Caco-2 (cell line): ENCODE measurements at regions of chr1 and their contacts with region 1.

Region 1: DNA sequence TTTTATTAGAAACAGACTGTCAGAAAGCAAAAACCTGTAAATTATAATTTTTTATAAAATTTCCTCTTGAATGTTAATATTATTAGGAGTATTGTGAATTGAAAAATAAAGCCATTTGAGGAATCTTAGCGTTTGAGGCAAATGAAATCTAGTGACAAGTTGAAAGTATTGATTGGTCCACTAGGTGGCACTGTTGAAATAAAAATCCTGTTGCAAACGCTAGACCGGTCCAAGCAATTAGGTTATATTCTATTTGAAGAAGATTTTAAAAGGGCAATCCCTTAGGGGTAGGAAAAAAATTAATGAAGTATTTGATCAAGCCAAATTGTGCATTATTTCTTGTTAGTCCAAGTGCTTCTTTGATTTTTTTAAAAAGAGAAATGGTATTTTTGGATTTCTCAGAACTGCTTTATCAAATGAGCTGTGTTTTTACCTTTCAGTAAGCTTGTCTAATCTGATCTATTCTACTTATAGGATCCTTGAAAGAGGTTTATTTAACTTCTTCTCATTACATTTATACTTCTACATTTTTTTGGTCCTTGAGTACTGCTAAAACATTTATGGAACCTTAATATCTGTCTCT is 57.7 kb downstream of the ATG4C start:
- DNase-seq: peak in 1 of 2 experiments; percentile 45
- H3K4me3 ChIP-seq: no peak overlapping the region
- H3K4me3 Mint-ChIP-seq: no peak overlapping the region
- H3K27ac Mint-ChIP-seq: no peak overlapping the region
- H3K4me1 ChIP-seq: no peaks in the 10 kb centered on the region
- H3K4me1 Mint-ChIP-seq: no peaks in the 10 kb centered on the region
- H3K27me3 ChIP-seq: no peaks in the 10 kb centered on the region
- H3K27me3 Mint-ChIP-seq: no peaks in the 10 kb centered on the region
- CTCF ChIP-seq: peak; percentile 38 to 43

Region 2: DNA sequence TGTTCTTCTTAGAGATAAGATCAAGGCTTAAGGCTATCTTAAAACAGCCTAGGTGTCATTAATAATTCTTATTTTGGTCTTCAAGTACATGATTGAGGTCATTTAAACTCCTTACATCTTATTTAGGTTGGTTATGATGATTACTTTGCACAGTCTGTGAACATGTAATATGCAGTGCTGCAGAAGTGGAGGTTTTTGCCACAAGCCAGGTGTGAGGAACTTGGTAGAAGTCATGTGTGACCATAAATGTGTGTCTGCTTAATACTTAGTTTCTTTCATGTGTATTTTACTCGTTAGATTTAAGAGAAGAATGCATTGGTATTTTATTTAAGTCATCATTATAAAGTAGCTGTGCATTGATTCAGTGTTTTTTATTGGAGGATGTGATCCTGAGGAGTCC is 47.6 kb before region 1 on chr1:
- CTCF ChIA-PET with region 1: no interaction called
- POLR2A ChIA-PET with region 1: no interaction called
- intact Hi-C with region 1: no loop called
- DNase-seq: no peak
- H3K4me3 ChIP-seq: no peak overlapping the region
- H3K4me3 Mint-ChIP-seq: no peak overlapping the region
- H3K27ac Mint-ChIP-seq: no peak overlapping the region
- H3K4me1 ChIP-seq: no peaks in the 10 kb centered on the region
- H3K4me1 Mint-ChIP-seq: no peaks in the 10 kb centered on the region
- H3K27me3 ChIP-seq: no peaks in the 10 kb centered on the region
- H3K27me3 Mint-ChIP-seq: no peaks in the 10 kb centered on the region
- CTCF ChIP-seq: no peak

Region 3: GRCh38 chr1:62906428-62906886 is 64.8 kb after region 1 on chr1:
- CTCF ChIA-PET with region 1: interaction called, 5 read pairs
- POLR2A ChIA-PET with region 1: no interaction called
- intact Hi-C with region 1: loop called (anchors 10 kb)
- DNase-seq: no peak
- H3K4me3 ChIP-seq: no peak overlapping the region
- H3K4me3 Mint-ChIP-seq: no peak overlapping the region
- H3K27ac Mint-ChIP-seq: no peak overlapping the region
- H3K4me1 ChIP-seq: no peaks in the 10 kb centered on the region
- H3K4me1 Mint-ChIP-seq: no peaks in the 10 kb centered on the region
- H3K27me3 ChIP-seq: no peaks in the 10 kb centered on the region
- H3K27me3 Mint-ChIP-seq: no peaks in the 10 kb centered on the region
- CTCF ChIP-seq: peak; percentile 17 to 38

Region 4: GRCh38 chr1:62917805-62918204 is 76.1 kb after region 1 on chr1:
- CTCF ChIA-PET with region 1: no interaction called
- POLR2A ChIA-PET with region 1: no interaction called
- intact Hi-C with region 1: no loop called
- DNase-seq: no peak
- H3K4me3 ChIP-seq: no peak overlapping the region
- H3K4me3 Mint-ChIP-seq: no peak overlapping the region
- H3K27ac Mint-ChIP-seq: no peak overlapping the region
- H3K4me1 ChIP-seq: no peaks in the 10 kb centered on the region
- H3K4me1 Mint-ChIP-seq: no peaks in the 10 kb centered on the region
- H3K27me3 ChIP-seq: no peaks in the 10 kb centered on the region
- H3K27me3 Mint-ChIP-seq: peaks cover 2% of the 10 kb centered on the region
- CTCF ChIP-seq: no peak

Region 5: DNA sequence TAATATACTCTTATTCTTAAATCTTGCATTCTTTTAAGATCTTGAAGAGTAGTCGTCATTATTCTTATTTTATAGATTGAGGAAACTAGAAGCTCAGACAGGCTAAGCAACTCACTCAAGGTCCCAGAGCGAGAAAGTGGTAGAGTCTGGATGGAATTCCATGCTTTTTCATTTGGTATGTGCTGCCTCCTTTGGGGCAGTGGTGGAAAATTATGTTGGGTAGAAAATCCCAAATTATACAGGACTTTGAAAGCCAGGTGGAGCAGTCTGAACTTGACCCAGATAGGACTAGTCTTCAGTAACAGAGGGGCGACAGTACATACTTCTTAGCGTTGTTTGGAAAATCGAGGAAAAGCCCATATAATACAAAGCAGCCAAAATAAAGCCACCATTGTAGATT is 147.8 kb after region 1 on chr1:
- CTCF ChIA-PET with region 1: interaction called, 3 read pairs
- POLR2A ChIA-PET with region 1: no interaction called
- intact Hi-C with region 1: loop called (anchors 1 kb)
- DNase-seq: peak in 1 of 2 experiments; percentile 2
- H3K4me3 ChIP-seq: no peak overlapping the region
- H3K4me3 Mint-ChIP-seq: no peak overlapping the region
- H3K27ac Mint-ChIP-seq: no peak overlapping the region
- H3K4me1 ChIP-seq: no peaks in the 10 kb centered on the region
- H3K4me1 Mint-ChIP-seq: no peaks in the 10 kb centered on the region
- H3K27me3 ChIP-seq: no peaks in the 10 kb centered on the region
- H3K27me3 Mint-ChIP-seq: peaks cover 26% of the 10 kb centered on the region
- CTCF ChIP-seq: peak in 1 of 2 experiments; percentile 22